ENCODE measurements at regions of chr2 and their contacts with region 1.

Region 1: DNA sequence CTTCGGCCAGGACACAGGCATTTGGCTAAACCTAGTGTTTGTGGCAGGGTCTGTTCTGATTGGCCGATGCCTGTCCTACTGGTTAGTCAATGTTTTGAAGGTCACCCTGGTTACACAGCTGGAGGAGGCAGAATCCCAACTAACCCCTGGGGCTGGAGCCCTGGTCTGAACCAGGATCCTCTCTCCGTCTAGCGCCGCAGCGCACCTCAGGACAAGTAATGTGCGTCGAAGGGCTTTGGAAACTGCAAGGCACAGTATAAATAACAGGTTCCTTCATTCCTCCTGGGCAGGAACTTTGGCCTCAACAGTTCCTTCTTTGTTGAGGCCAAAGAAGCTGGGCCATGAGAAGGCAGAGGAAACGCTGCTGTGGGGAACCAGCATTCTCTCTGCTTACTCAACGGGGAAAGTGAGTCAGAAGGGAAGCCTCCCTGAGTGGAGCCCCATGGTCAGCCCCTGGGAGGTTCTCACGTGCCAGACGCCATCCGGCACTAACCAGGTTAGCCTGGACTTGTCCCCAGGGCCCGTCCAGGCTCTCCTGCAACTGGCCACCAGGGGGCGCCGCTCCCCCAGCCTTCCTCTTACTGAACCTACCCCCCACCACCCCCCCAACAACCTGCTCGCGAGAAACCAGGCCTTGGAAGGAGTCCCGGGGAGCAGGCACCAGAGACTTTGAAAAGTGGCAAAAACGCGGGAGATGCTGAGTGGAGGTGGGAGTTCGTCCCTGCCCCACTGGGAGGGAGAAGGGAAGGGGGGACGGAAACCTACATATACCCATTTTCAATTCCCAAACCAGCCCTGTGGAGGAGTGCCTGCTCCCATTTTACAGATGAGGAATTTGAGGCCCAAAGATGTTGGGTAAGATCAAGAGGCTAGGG is 19.8 kb downstream of the TEX44 start:
- DNase-seq: peak; percentile 93
- H3K4me3 ChIP-seq: peak overlapping the region in 1 of 2 experiments; percentile 40; a peak in 1 of 4 replicates
- H3K27ac ChIP-seq: peak overlapping the region in 1 of 2 experiments; percentile 89; a peak in 3 of 4 replicates
- H3K4me1 ChIP-seq: peaks cover 24 to 26% of the 10 kb centered on the region in 2 experiments; a peak in 3 of 4 replicates
- H3K27me3 ChIP-seq: no peaks in the 10 kb centered on the region
- CTCF ChIP-seq: peak; percentile 97
- EP300 ChIP-seq: peak in 1 of 2 experiments; percentile 27; a peak in 1 of 4 replicates
- RAD21 ChIP-seq: peak; percentile 85

Region 2: DNA sequence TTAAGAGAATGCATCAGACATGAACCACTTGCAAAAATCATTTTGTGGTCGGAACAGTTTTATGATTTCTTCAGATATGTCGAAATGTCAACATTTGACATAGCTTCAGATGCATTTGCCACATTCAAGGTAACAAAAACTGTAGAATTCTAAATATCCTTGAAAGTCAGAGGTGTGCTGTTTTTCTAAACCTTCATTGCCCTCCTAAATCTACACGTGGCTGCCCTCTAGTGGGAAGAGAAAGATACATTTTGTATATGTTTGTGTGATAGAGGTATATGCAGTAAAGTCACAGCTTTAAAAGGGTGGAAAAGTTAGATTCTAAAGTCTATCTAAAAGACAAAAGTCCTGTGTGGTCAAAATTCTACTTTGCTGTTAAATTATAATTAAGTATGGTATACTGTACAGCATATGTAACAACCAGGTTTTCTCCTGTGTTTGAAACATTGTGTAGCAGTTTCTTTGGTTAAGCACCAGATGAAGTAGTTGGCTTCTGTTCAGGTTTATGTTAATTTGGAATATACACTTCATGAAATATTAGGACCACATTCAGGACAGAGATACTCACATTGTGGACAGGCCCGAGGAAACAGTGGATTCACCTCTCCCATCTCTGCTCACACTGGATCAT is 813.5 kb before region 1 on chr2:
- CTCF ChIA-PET with region 1: no interaction called
- POLR2A ChIA-PET with region 1: no interaction called
- DNase-seq: peak; percentile 41
- H3K4me3 ChIP-seq: no peak overlapping the region
- H3K27ac ChIP-seq: no peak overlapping the region
- H3K4me1 ChIP-seq: peaks cover 7 to 22% of the 10 kb centered on the region in 2 experiments
- H3K27me3 ChIP-seq: no peaks in the 10 kb centered on the region
- CTCF ChIP-seq: peak; percentile 73
- EP300 ChIP-seq: no peak
- RAD21 ChIP-seq: peak; percentile 78

Region 3: GRCh38 chr2:231648587-231649174 is 36.3 kb after region 1 on chr2:
- CTCF ChIA-PET with region 1: interaction called, 13 read pairs
- POLR2A ChIA-PET with region 1: no interaction called
- DNase-seq: peak; percentile 85
- H3K4me3 ChIP-seq: no peak overlapping the region
- H3K27ac ChIP-seq: no peak overlapping the region
- H3K4me1 ChIP-seq: peaks cover 0 to 2% of the 10 kb centered on the region in 2 experiments; a peak in 1 of 4 replicates
- H3K27me3 ChIP-seq: no peaks in the 10 kb centered on the region
- CTCF ChIP-seq: peak; percentile 60
- EP300 ChIP-seq: no peak
- RAD21 ChIP-seq: peak; percentile 84

Region 4: GRCh38 chr2:231680992-231681853 is 68.8 kb after region 1 on chr2:
- CTCF ChIA-PET with region 1: interaction called, 256 read pairs
- POLR2A ChIA-PET with region 1: no interaction called
- DNase-seq: peak; percentile 99
- H3K4me3 ChIP-seq: peak overlapping the region; percentile 54 to 57; a peak in 3 of 4 replicates
- H3K27ac ChIP-seq: peak overlapping the region; percentile 54 to 84
- H3K4me1 ChIP-seq: peaks cover 0 to 16% of the 10 kb centered on the region in 2 experiments; a peak in 1 of 4 replicates
- H3K27me3 ChIP-seq: no peaks in the 10 kb centered on the region
- CTCF ChIP-seq: no peak
- EP300 ChIP-seq: no peak
- RAD21 ChIP-seq: no peak